ENCODE measurements at regions of chr5 and their contacts with region 1.

Region 1: DNA sequence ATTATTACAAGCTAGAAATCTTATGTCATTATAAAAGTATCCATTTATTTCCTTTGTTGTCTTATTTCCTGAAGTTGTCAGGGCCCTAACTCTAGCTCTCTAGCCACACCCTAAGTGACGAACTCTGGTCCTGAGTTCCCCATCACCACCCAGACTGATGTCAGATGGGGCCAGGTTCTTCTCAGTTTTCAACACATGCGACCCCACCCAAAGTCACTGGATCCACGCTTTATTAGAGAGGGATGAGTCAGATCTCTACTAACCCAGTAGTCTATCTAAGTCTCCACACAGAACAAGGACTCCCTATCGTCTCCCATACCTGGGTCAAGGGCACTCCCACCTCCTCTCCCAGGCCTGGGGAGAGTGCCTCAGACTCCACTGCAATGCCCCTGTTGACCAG is 6.8 kb upstream of the FEM1C start:
- DNase-seq: no peak
- CTCF ChIP-seq: no peak

Region 2: DNA sequence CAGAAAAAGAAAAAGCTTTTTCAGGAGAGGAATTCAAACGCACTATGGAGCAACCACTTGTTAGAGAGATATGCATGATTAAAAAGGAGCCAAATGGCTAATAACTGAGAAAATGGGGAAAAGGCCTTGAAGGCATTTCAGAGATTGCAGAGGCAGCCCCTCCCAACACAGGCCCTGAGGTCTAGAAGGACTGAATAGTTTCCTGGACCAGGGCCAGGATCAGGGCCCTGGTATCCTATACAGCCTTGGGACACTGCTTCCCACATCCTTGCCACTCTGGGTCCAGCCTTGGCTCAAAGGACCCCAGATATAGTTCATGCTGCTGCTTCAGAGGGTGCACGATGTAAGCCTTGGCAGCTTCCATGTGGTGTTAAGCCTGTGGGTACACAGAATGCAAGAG is 13.8 kb after region 1 on chr5:
- CTCF ChIA-PET with region 1: interaction called, 62 read pairs
- POLR2A ChIA-PET with region 1: no interaction called
- DNase-seq: no peak
- CTCF ChIP-seq: no peak

Region 3: GRCh38 chr5:115571441-115571878 is 20.0 kb after region 1 on chr5:
- CTCF ChIA-PET with region 1: interaction called, 62 read pairs
- POLR2A ChIA-PET with region 1: interaction called, 4 read pairs
- DNase-seq: no peak
- CTCF ChIP-seq: no peak

Region 4: GRCh38 chr5:115586601-115587048 is 35.2 kb after region 1 on chr5:
- CTCF ChIA-PET with region 1: no interaction called
- POLR2A ChIA-PET with region 1: no interaction called
- DNase-seq: no peak
- CTCF ChIP-seq: peak; percentile 45

Measured in GM10248 (cell line).